ENCODE measurements at regions of chr2 and their contacts with region 1.

Region 1: DNA sequence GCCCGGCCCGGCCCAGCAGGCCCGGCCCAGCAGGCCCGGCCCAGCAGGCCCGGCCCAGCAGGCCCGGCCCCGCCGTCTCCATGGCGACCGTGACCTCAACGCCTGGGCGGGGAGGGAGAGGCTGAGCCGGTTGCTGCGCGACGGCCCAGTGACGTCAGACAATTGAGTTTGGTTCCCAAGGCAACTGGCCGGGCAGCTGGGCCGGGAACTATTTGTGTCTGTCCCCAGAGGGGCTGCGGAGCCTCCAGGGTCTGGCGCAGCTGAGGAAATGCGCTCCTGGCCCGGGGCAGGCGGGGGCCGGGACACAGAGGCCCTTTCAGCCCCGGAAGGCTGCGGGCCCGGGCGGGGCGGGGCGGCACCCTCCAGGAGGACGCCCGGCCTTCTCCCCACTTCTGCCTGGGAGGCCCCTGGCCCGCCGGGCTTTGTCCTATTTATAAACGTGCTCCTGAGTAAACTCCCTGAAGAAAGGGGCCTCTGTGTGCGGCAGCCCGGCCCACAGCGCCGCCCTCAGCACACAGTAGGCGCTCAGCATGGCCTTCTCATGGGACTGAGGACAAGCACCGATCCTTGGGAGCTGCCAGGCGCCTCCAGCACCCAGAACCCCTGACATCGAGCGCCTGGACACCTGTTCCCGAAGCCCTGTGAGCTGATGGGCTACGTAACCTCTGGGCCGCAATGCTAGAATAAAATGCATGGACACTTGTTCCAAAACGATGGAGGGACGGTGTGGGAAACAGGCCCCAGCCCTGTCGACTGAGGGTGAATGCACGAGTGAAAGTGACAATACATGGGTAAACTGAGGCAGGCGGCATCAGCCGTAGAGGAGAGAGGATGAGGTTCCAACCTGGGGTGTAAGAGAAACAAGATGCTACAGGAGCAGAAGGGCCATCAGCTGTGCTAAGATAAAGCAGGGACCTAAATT is 12.3 kb downstream of the TEX44 start:
- DNase-seq: peak; percentile 65
- H3K4me3 ChIP-seq: peak overlapping the region; percentile 56
- CTCF ChIP-seq: no peak

Region 2: GRCh38 chr2:231519432-231519831 is 85.5 kb before region 1 on chr2:
- CTCF ChIA-PET with region 1: interaction called, 22 read pairs
- POLR2A ChIA-PET with region 1: interaction called, 3 read pairs
- DNase-seq: no peak
- H3K4me3 ChIP-seq: no peak overlapping the region
- CTCF ChIP-seq: no peak

Region 3: GRCh38 chr2:231557571-231558237 is 47.2 kb before region 1 on chr2:
- CTCF ChIA-PET with region 1: interaction called, 159 read pairs
- POLR2A ChIA-PET with region 1: no interaction called
- DNase-seq: peak; percentile 23
- H3K4me3 ChIP-seq: no peak overlapping the region
- CTCF ChIP-seq: peak; percentile 66

Region 4: DNA sequence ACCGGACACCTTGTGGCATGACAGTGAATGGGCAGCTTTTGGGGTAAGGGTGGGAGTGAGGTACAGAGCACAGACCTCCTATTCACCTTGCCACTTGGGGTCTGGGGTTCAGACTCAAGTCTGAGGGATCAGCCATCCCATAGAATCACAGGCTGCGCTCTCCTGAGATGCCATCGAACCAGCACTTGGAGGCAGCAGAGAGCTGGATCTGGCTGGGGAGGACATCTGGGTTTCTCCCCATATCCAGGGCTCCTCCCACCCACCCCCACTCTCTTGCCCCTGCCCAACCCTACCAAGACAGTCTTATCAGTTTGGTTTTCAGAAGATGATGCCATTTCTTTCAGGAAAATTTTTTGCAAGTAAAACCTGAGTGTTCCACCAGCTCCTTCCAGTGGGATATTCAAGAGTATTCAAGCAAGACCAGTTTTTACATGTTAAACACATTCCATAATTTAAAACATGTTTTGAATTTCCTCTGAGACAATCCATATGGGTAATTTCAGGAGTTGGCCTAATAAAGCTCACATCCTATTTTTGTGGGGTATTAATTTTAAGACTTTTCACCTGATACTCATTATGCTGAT is 41.5 kb before region 1 on chr2:
- CTCF ChIA-PET with region 1: interaction called, 159 read pairs
- POLR2A ChIA-PET with region 1: no interaction called
- DNase-seq: no peak
- H3K4me3 ChIP-seq: no peak overlapping the region
- CTCF ChIP-seq: peak; percentile 79

Region 5: DNA sequence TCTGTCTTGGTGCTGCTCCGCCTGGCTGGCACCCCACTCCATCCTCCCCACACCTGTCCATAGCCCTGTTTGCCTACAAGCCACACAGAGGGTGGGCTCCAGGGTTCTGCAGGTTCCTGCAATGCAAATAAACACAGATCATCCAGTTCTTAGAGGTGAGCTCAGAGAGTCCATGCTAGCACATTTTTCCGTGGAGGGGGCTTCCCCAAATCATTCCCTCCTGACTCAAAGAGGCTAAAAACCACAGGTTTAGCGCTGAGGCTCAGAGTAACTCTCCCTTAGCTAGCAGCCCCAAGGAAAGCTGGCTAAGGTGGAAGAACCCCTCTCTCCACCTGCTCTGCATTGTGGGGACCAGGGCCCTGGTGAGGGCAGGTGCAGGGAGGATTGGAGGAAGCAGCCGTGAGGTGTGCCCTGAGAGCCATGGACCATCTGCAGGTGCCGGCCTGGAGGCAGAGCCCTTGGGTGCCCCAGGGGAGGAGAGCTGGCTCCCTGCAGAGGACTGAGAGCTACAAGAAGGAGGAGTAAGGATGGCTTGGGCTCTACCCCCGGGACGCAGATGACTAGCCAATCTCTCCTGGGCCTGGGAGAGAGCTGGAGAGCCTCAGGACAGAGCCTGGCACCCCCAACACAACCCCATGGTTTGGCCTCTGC is 36.0 kb before region 1 on chr2:
- CTCF ChIA-PET with region 1: interaction called, 159 read pairs
- POLR2A ChIA-PET with region 1: no interaction called
- DNase-seq: no peak
- H3K4me3 ChIP-seq: no peak overlapping the region
- CTCF ChIP-seq: no peak

Region 6: DNA sequence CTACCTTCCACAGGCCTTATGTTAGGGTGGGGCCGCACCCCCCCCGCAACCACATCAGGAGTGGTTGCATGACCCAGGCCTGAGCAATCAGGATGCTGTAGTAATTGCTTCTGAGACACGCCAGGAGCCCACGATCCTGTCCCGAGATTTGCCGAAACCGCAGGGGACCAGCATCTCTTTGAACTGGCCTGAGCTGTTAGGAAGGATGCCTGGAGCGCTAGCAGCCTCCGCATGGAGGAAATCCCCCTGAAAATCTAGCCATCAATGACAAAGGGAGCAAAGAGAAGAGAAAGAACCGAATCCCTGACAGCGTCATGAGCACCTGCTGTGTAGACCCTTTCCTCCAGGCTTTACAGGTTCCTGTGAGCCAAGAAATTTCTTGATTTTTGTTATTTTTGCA is 21.0 kb before region 1 on chr2:
- CTCF ChIA-PET with region 1: interaction called, 62 read pairs
- POLR2A ChIA-PET with region 1: no interaction called
- DNase-seq: no peak
- H3K4me3 ChIP-seq: no peak overlapping the region
- CTCF ChIP-seq: no peak

Region 7: GRCh38 chr2:231590619-231591018 is 14.3 kb before region 1 on chr2:
- CTCF ChIA-PET with region 1: interaction called, 62 read pairs
- POLR2A ChIA-PET with region 1: no interaction called
- DNase-seq: no peak
- H3K4me3 ChIP-seq: no peak overlapping the region
- CTCF ChIP-seq: no peak

Measured in AG04449 (cell line).